ENCODE measurements at regions of chr12 and their contacts with region 1.

Region 1: GRCh38 chr12:131311764-131312163 is 358.1 kb downstream of the ADGRD1 start:
- DNase-seq: no peak
- ATAC-seq: no peak

Region 2: DNA sequence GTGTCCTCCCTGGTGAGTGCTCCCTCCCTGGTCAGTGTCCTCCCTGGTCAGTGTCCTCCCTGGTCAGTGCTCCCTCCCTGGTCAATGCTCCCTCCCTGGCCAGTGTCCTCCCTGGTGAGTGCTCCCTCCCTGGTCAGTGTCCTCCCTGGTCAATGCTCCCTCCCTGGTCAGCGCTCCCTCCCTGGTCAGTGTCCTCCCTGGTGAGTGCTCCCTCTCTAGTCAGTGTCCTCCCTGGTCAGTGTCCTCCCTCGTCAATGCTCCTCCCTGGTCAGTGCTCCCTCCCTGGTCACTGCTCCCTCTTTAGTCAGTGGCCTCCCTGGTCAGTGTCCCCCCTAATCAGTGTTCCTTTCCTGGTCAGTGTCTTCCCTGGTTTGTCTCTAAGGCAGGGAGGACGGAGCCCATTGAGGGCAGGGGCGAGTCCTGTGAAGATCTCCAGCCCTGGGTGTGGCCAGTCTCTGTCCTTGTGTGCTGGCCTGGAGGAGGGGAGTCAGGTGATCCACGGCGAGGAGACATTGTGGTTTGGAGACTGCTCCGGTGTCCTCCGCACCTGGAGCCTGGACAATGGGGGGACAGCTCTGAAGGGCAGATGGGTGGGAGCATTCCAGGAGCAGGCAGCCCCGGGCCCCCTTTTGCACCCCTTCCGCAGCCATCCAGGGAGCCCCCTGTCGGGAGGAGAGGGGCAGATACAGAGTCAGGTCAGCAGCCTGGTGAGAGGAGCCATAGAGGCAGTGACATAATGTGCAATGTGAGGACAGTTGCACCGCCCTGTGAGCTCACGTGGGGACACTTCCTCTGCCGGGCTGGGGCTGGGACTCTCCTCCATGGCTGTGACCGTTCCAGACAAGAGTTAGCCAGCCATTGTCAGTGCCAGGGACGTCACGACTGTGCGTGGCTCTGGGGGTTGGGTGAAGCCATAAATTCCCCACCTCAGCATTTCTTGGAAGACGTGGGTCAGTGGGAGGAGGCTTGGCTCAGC is 264.7 kb before region 1 on chr12:
- intact Hi-C with region 1: no loop called
- DNase-seq: peak in 1 of 2 donors; percentile 22
- ATAC-seq: no peak

Region 3: GRCh38 chr12:131363393-131363792 is 51.6 kb after region 1 on chr12:
- intact Hi-C with region 1: no loop called
- DNase-seq: no peak
- ATAC-seq: no peak

Region 4: DNA sequence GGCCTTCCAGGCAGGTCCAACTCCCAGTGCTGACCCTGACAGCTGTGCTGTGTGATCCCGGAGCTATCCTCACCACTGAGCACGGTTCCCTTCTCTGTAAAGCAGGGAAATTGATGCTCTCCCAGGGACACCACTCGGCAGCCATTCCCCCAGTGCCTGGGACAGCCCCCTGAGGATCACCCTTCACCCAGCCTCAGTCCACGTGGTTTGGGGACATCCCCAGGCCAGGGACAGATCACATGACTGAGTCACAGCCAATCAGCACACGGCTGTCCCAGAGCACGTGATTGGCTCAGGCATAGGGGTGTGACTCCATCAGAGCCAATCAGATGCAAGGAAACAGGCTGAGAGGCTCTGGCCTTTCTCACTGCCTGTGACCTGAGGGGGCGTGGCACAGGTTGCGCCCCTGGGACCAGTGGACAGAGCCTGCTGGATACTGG is 330.4 kb after region 1 on chr12:
- intact Hi-C with region 1: loop called in 1 of 2 experiments (anchors 5 kb)
- DNase-seq: no peak
- ATAC-seq: no peak

Measured in left colon (tissue), 2 donors.